GM23248 (cell line): ENCODE measurements at regions of chr3 and their contacts with region 1.

Region 1: GRCh38 chr3:57397175-57398026 is 104.9 kb upstream of the ASB14 start:
- DNase-seq: peak; percentile 63
- H3K4me3 ChIP-seq: no peak overlapping the region
- H3K27ac ChIP-seq: no peak overlapping the region
- H3K4me1 ChIP-seq: no peaks in the 10 kb centered on the region
- H3K27me3 ChIP-seq: no peaks in the 10 kb centered on the region

Region 2: DNA sequence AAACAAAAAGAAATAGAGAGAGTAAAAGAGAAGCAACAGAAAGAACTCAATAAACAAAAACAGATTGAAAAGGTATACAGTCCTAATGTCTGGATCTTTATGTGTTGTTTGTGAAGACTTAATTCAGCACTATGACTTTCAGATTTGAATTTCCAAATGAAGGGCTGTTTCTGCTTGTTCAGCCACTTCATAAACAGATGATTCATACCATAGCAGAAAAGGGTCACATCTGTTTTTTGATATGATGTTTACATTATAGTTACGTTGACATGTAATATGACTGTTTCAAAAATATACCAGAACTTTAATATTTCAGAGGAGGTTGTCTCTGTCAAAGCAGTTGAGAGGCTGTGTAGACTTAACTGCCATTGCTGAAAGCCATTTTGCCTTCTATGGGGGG is 129.0 kb before region 1 on chr3:
- in situ Hi-C with region 1: no loop called
- DNase-seq: no peak
- H3K4me3 ChIP-seq: no peak overlapping the region
- H3K27ac ChIP-seq: no peak overlapping the region
- H3K4me1 ChIP-seq: no peaks in the 10 kb centered on the region
- H3K27me3 ChIP-seq: no peaks in the 10 kb centered on the region

Region 3: GRCh38 chr3:57826245-57826951 is 429.0 kb after region 1 on chr3:
- in situ Hi-C with region 1: loop called (anchors 25 kb)
- DNase-seq: peak; percentile 17
- H3K4me3 ChIP-seq: no peak overlapping the region
- H3K27ac ChIP-seq: no peak overlapping the region
- H3K4me1 ChIP-seq: peaks cover 15% of the 10 kb centered on the region
- H3K27me3 ChIP-seq: no peaks in the 10 kb centered on the region

Region 4: GRCh38 chr3:58670506-58671135 is 1273.2 kb after region 1 on chr3:
- in situ Hi-C with region 1: no loop called
- DNase-seq: no peak
- H3K4me3 ChIP-seq: no peak overlapping the region
- H3K27ac ChIP-seq: no peak overlapping the region
- H3K4me1 ChIP-seq: no peaks in the 10 kb centered on the region
- H3K27me3 ChIP-seq: peaks cover 13% of the 10 kb centered on the region; the same call in 1 of the 2 replicates